ENCODE measurements at regions of chr7 and their contacts with region 1.

Region 1: DNA sequence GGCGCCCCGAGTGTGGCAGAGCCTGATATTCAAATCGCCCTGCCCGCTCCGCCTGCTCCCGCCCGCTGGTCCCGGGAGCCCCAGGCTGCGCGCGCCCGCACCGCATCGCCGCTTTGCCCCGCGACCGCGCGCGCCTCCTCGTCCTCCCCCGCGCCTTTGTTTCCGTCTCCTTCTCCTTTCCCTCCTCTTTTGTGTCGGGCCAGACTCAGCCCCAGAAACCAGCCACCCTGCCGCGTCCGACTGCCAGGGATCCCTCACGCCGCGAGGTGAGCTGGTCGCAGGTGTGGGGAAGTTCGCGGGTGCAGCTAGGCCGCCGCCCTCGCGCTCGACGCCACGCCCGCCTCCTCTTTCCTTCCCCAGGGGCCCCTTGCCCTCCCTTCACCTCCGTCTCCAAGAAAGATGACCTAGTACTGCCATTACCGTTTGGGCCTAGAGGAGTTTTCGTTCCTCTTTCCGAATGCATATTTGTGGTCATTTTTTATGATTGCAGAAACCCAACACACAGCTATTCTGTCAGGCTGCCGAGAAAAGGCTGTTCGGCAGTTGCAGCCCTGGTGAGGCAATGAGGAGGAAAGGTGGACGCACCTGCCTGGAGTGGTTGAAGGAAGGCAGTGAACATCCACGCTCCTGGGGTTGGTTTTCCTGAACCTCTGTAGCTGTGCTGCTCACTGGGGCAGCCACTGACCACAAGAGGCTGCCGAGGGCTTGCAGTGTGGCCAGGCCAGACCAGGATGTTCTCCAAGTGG is 107.3 kb downstream of the SNX10 start:
- DNase-seq: peak; percentile 61 to 67
- ATAC-seq: peak; percentile 60 to 70 (median 63)
- H3K4me3 ChIP-seq: peak overlapping the region; percentile 89
- H3K27ac ChIP-seq: peak overlapping the region; percentile 99
- H3K4me1 ChIP-seq: peaks cover 12% of the 10 kb centered on the region
- H3K27me3 ChIP-seq: no peaks in the 10 kb centered on the region
- CTCF ChIP-seq: peak; percentile 33

Region 2: GRCh38 chr7:25656581-25657026 is 742.3 kb before region 1 on chr7:
- intact Hi-C with region 1: no loop called
- DNase-seq: no peak
- ATAC-seq: no peak
- H3K4me3 ChIP-seq: no peak overlapping the region
- H3K27ac ChIP-seq: no peak overlapping the region
- H3K4me1 ChIP-seq: no peaks in the 10 kb centered on the region
- H3K27me3 ChIP-seq: no peaks in the 10 kb centered on the region
- CTCF ChIP-seq: no peak

Region 3: GRCh38 chr7:26723129-26723528 is 324.2 kb after region 1 on chr7:
- intact Hi-C with region 1: no loop called
- DNase-seq: no peak
- ATAC-seq: no peak
- H3K4me3 ChIP-seq: no peak overlapping the region
- H3K27ac ChIP-seq: no peak overlapping the region
- H3K4me1 ChIP-seq: no peaks in the 10 kb centered on the region
- H3K27me3 ChIP-seq: no peaks in the 10 kb centered on the region
- CTCF ChIP-seq: no peak

Region 4: GRCh38 chr7:27143023-27143949 is 744.4 kb after region 1 on chr7 and contains the start of gene HOXA5:
- intact Hi-C with region 1: loop called in 1 of 2 experiments (anchors 10 kb)
- DNase-seq: peak; percentile 84 to 86
- ATAC-seq: peak; percentile 51 to 92 (median 76)
- H3K4me3 ChIP-seq: peak within 1 kb of the TSS; percentile 74
- H3K27ac ChIP-seq: peak within 1 kb of the TSS; percentile 83
- H3K4me1 ChIP-seq: peaks cover 13% of the 10 kb centered on the region
- H3K27me3 ChIP-seq: no peaks in the 10 kb centered on the region
- CTCF ChIP-seq: peak; percentile 71
- total RNA-seq, gene HOXA5: 4.7 to 18.8 (median 8.1) TPM